PC-3 (cell line): ENCODE measurements at regions of chr2 and their contacts with region 1.

Region 1: GRCh38 chr2:100730346-100730745 is 89.6 kb upstream of the NPAS2 start:
- DNase-seq: peak; percentile 88
- ATAC-seq: peak; percentile 60
- H3K4me3 ChIP-seq: no peak overlapping the region
- H3K27ac ChIP-seq: peak overlapping the region; percentile 12; the same call in 1 of the 2 replicates
- H3K4me1 ChIP-seq: peaks cover 29% of the 10 kb centered on the region
- H3K27me3 ChIP-seq: no peaks in the 10 kb centered on the region
- CTCF ChIP-seq: peak; percentile 92

Region 2: GRCh38 chr2:99572373-99573164 is 1157.8 kb before region 1 on chr2:
- CTCF ChIA-PET with region 1: no interaction called
- POLR2A ChIA-PET with region 1: no interaction called
- intact Hi-C with region 1: no loop called
- DNase-seq: peak; percentile 18
- ATAC-seq: peak; percentile 42
- H3K4me3 ChIP-seq: no peak overlapping the region
- H3K27ac ChIP-seq: no peak overlapping the region
- H3K4me1 ChIP-seq: peaks cover 5% of the 10 kb centered on the region
- H3K27me3 ChIP-seq: no peaks in the 10 kb centered on the region
- CTCF ChIP-seq: no peak

Region 3: GRCh38 chr2:100548771-100549170 is 181.6 kb before region 1 on chr2:
- CTCF ChIA-PET with region 1: no interaction called
- POLR2A ChIA-PET with region 1: no interaction called
- intact Hi-C with region 1: no loop called
- DNase-seq: no peak
- ATAC-seq: no peak
- H3K4me3 ChIP-seq: no peak overlapping the region
- H3K27ac ChIP-seq: no peak overlapping the region
- H3K4me1 ChIP-seq: no peaks in the 10 kb centered on the region
- H3K27me3 ChIP-seq: no peaks in the 10 kb centered on the region
- CTCF ChIP-seq: no peak

Region 4: GRCh38 chr2:100653449-100654035 is 76.8 kb before region 1 on chr2:
- CTCF ChIA-PET with region 1: no interaction called
- POLR2A ChIA-PET with region 1: no interaction called
- intact Hi-C with region 1: no loop called
- DNase-seq: no peak
- ATAC-seq: no peak
- H3K4me3 ChIP-seq: no peak overlapping the region
- H3K27ac ChIP-seq: no peak overlapping the region
- H3K4me1 ChIP-seq: 0 out of 2 replicates have a peak, but pooled peaks cover 7% of the 10 kb centered on the region
- H3K27me3 ChIP-seq: no peaks in the 10 kb centered on the region
- CTCF ChIP-seq: no peak

Region 5: DNA sequence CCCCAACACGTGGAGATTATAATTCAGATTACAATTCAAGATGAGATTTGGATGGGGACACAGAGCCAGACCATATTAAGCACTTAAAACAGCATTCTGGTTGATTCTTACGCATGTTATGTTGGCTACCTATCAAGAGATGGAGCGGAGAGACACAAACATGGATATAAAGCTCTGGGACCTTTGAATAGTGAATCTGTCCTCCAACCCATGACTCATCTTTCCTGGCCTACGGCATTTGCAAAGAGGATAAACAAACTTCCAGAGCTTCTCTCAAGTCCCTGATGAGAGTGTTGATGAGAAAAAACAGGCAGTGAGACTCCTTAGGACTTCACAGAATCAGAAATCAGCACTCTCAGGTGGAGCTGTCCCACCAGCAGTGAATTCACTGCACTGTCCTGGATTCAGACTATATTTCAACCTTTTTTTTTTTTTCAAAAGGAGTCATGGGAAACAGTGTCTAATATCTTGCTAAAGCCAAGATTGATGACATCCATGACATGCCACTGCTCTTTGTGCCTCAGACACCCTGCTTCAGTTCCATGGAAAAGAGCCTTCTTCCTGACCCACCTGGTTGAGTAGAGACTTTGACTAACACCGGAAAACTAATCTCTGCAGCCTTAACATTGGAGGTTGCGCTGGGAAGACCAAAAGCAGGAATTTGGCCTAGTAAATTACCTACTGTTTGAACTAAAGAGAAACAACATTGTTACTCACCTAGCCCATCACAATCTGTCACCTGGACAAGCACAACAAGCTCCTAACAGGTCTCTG is 27.5 kb after region 1 on chr2:
- CTCF ChIA-PET with region 1: interaction called, 12 read pairs
- POLR2A ChIA-PET with region 1: no interaction called
- intact Hi-C with region 1: no loop called
- DNase-seq: peak; percentile 94
- ATAC-seq: peak; percentile 60
- H3K4me3 ChIP-seq: no peak overlapping the region
- H3K27ac ChIP-seq: peak overlapping the region; percentile 87
- H3K4me1 ChIP-seq: peaks cover 71% of the 10 kb centered on the region
- H3K27me3 ChIP-seq: no peaks in the 10 kb centered on the region
- CTCF ChIP-seq: no peak

Region 6: DNA sequence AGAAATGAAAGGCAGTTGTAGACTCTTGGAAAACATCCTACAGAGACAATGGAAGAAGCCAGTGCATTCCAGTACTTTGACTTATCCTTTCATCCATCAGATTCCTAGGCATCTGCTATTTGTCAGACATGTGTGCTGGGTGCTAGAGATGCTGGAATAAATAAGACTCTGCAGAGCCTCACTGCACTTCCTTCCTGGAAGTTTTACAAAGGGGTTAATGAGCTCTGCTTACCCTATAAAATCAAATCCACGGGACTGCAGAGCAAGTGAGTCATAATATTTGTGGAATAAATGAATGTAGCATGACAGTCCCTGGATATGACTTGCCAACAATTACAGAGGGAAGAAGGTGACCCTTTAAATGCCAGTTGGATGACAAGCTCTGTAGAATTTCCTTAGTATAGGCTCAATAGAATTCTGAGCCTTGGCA is 36.9 kb after region 1 on chr2:
- CTCF ChIA-PET with region 1: no interaction called
- POLR2A ChIA-PET with region 1: no interaction called
- intact Hi-C with region 1: loop called (anchors 1 kb)
- DNase-seq: peak; percentile 97
- ATAC-seq: peak; percentile 79
- H3K4me3 ChIP-seq: peak overlapping the region; percentile 47
- H3K27ac ChIP-seq: peak overlapping the region; percentile 96
- H3K4me1 ChIP-seq: peaks cover 52% of the 10 kb centered on the region
- H3K27me3 ChIP-seq: no peaks in the 10 kb centered on the region
- CTCF ChIP-seq: no peak

Region 7: GRCh38 chr2:100780203-100781008 is 50.1 kb after region 1 on chr2:
- CTCF ChIA-PET with region 1: interaction called, 4 read pairs
- POLR2A ChIA-PET with region 1: no interaction called
- intact Hi-C with region 1: loop called (anchors 1 kb)
- DNase-seq: peak; percentile 96
- ATAC-seq: peak; percentile 84
- H3K4me3 ChIP-seq: no peak overlapping the region; the same call in 1 of the 2 replicates
- H3K27ac ChIP-seq: peak overlapping the region; percentile 99
- H3K4me1 ChIP-seq: peaks cover 48% of the 10 kb centered on the region
- H3K27me3 ChIP-seq: no peaks in the 10 kb centered on the region
- CTCF ChIP-seq: no peak

Region 8: GRCh38 chr2:100865816-100866460 is 135.6 kb after region 1 on chr2:
- CTCF ChIA-PET with region 1: no interaction called
- POLR2A ChIA-PET with region 1: no interaction called
- intact Hi-C with region 1: loop called (anchors 5 kb)
- DNase-seq: peak; percentile 91
- ATAC-seq: peak; percentile 91
- H3K4me3 ChIP-seq: no peak overlapping the region
- H3K27ac ChIP-seq: peak overlapping the region; percentile 91
- H3K4me1 ChIP-seq: peaks cover 44% of the 10 kb centered on the region
- H3K27me3 ChIP-seq: no peaks in the 10 kb centered on the region
- CTCF ChIP-seq: no peak

Region 9: GRCh38 chr2:100902833-100903405 is 172.6 kb after region 1 on chr2:
- CTCF ChIA-PET with region 1: interaction called, 7 read pairs
- POLR2A ChIA-PET with region 1: no interaction called
- intact Hi-C with region 1: loop called (anchors 2 kb)
- DNase-seq: peak; percentile 97
- ATAC-seq: peak; percentile 85
- H3K4me3 ChIP-seq: no peak overlapping the region; the same call in 1 of the 2 replicates
- H3K27ac ChIP-seq: peak overlapping the region; percentile 100
- H3K4me1 ChIP-seq: peaks cover 57% of the 10 kb centered on the region
- H3K27me3 ChIP-seq: no peaks in the 10 kb centered on the region
- CTCF ChIP-seq: peak; percentile 29; the same call in 1 of the 2 replicates

Region 10: GRCh38 chr2:100984892-100985379 is 254.6 kb after region 1 on chr2:
- CTCF ChIA-PET with region 1: no interaction called
- POLR2A ChIA-PET with region 1: no interaction called
- intact Hi-C with region 1: loop called (anchors 1 kb)
- DNase-seq: peak; percentile 79
- ATAC-seq: peak; percentile 61
- H3K4me3 ChIP-seq: no peak overlapping the region
- H3K27ac ChIP-seq: no peak overlapping the region
- H3K4me1 ChIP-seq: peaks cover 5% of the 10 kb centered on the region; the same call in 1 of the 2 replicates
- H3K27me3 ChIP-seq: no peaks in the 10 kb centered on the region
- CTCF ChIP-seq: peak; percentile 95